Panc1 (cell line): ENCODE measurements at regions of chr10 and their contacts with region 1.

Region 1: DNA sequence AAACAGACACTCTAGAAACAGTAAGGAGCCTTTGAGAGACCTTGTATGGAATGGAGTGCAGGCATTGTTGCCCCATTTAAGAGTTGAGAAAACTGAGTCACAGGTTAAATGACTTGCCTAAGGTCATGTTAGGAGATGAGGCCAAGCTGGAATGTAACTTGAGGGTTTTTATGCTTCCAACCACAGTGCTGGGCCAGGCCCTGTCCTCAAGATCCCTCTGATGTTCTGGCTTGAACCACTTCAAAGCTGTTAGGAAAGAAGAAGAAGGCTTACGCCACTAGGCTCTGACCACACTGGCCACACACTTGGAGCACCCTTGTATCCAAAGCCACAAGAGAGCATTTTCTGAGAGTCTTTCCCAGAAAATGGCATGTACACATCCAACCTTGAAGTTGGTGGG is 42.7 kb downstream of the PLAU start:
- DNase-seq: no peak
- ATAC-seq: no peak
- H3K4me3 ChIP-seq: no peak overlapping the region
- H3K27ac ChIP-seq: no peak overlapping the region
- H3K4me1 ChIP-seq: peaks cover 15% of the 10 kb centered on the region
- H3K27me3 ChIP-seq: no peaks in the 10 kb centered on the region
- CTCF ChIP-seq: no peak

Region 2: GRCh38 chr10:73940634-73941221 is 12.9 kb before region 1 on chr10:
- CTCF ChIA-PET with region 1: interaction called, 7 read pairs
- POLR2A ChIA-PET with region 1: interaction called, 18 read pairs
- in situ Hi-C with region 1: no loop called
- intact Hi-C with region 1: no loop called
- DNase-seq: no peak
- ATAC-seq: peak; percentile 98
- H3K4me3 ChIP-seq: peak overlapping the region; percentile 2 to 47; a peak in 2 of 4 replicates
- H3K27ac ChIP-seq: peak overlapping the region; percentile 92
- H3K4me1 ChIP-seq: peaks cover 14% of the 10 kb centered on the region
- H3K27me3 ChIP-seq: no peaks in the 10 kb centered on the region
- CTCF ChIP-seq: peak; percentile 99